ENCODE measurements at regions of chr15 and their contacts with region 1.

Region 1: GRCh38 chr15:55588070-55588814 is at the start of gene PYGO1:
- DNase-seq: peak; percentile 70
- H3K4me3 ChIP-seq: peak within 1 kb of the TSS; percentile 44 to 80 (median 68)
- H3K27ac ChIP-seq: peak within 1 kb of the TSS; percentile 13
- H3K4me1 ChIP-seq: peaks cover 8% of the 10 kb centered on the region
- H3K27me3 ChIP-seq: no peaks in the 10 kb centered on the region
- CTCF ChIP-seq: no peak
- POLR2A ChIP-seq: no peak
- total RNA-seq, gene PYGO1: 5.7 and 7.6 TPM in 2 replicates

Region 2: DNA sequence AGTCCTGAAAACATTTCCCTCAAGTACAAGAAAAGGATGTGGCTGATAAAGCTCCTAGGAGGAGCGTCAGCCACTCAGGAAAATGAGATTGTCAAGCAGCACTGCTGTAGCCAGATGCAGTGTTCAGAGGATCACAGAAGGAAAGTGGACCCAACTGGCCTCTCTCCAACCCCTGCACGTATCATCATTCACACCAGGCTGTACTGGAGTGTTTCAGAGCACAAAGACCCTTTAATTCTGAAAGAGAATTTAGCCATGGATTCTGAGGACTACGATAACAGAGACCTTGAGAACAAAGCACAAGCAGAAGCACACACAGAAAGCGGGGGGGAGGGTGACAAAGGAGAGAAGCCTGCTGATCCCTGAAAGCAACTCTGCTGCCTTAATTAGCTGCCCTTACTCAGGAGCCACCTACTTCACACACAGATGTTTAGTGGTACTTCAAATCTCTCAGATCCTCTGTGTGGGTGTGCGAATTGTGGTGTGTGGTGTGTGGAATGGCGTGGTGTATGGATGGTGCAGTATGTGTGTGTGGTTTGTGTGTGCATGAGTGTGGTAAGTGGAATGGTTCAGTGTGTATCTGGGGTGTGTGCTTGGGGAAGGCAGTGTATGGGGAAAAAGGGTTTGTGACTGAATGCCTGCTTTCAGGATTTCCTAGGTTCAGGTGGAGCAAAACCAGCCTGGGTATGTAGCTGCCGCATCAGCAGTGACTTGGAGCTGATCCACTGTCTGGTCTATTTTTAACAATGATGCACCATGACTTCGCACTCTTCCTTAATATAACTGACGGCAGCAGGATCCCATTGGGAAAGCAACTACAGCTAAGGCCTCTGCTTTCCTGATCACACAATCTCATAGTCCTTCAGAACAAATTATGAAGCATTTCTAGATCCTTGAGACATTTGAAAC is 584.0 kb before region 1 on chr15:
- CTCF ChIA-PET with region 1: no interaction called
- POLR2A ChIA-PET with region 1: no interaction called
- dilution Hi-C with region 1: no loop called
- intact Hi-C with region 1: no loop called
- DNase-seq: no peak
- H3K4me3 ChIP-seq: no peak overlapping the region
- H3K27ac ChIP-seq: no peak overlapping the region
- H3K4me1 ChIP-seq: no peaks in the 10 kb centered on the region
- H3K27me3 ChIP-seq: no peaks in the 10 kb centered on the region
- CTCF ChIP-seq: no peak
- POLR2A ChIP-seq: no peak

Region 3: DNA sequence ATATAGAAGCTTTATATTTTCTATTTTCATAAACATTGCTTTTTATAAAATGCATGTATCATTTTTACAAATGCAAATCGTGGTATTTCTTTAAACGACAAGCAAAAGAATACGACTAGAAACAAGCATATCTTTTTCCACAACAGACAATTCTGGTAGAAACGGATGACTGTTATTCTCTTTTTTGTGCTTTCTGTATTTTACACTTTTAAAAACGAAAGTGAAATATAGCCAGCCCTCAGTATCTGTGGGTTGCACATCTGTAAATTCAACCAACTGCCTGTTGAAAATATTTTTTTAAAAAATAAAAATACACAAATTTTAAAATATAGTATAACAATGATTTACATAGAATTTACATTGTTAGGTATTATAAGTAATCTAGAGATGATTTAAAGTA is 93.4 kb after region 1 on chr15:
- CTCF ChIA-PET with region 1: no interaction called
- POLR2A ChIA-PET with region 1: no interaction called
- dilution Hi-C with region 1: no loop called
- intact Hi-C with region 1: no loop called
- DNase-seq: no peak
- H3K4me3 ChIP-seq: no peak overlapping the region
- H3K27ac ChIP-seq: no peak overlapping the region
- H3K4me1 ChIP-seq: no peaks in the 10 kb centered on the region
- H3K27me3 ChIP-seq: no peaks in the 10 kb centered on the region
- CTCF ChIP-seq: no peak
- POLR2A ChIP-seq: no peak

Region 4: GRCh38 chr15:55742927-55743728 is 154.9 kb after region 1 on chr15 and contains the start of gene PRTG:
- CTCF ChIA-PET with region 1: no interaction called
- POLR2A ChIA-PET with region 1: no interaction called
- dilution Hi-C with region 1: no loop called
- intact Hi-C with region 1: loop called (anchors 1 kb)
- DNase-seq: peak; percentile 81
- H3K4me3 ChIP-seq: peak within 1 kb of the TSS; percentile 26 to 98 (median 93)
- H3K27ac ChIP-seq: peak within 1 kb of the TSS; percentile 4
- H3K4me1 ChIP-seq: peaks cover 17% of the 10 kb centered on the region
- H3K27me3 ChIP-seq: no peaks in the 10 kb centered on the region
- CTCF ChIP-seq: no peak
- POLR2A ChIP-seq: peak; percentile 46
- total RNA-seq, gene PRTG: 8.2 and 12.4 TPM in 2 replicates

Measured in endothelial cell of umbilical vein (primary cell).